CD4-positive, alpha-beta memory T cell (primary cell): ENCODE measurements at regions of chrX and their contacts with region 1.

Region 1: GRCh38 chrX:151082076-151082948 is 94.1 kb upstream of the GPR50 start:
- DNase-seq: peak; percentile 39 to 50 (median 46)
- H3K4me3 ChIP-seq: no peak overlapping the region
- H3K4me3 Mint-ChIP-seq: peak overlapping the region in 6 of 8 donors; percentile 13 to 52 (median 25)
- H3K27ac ChIP-seq: no peak overlapping the region
- H3K27ac Mint-ChIP-seq: no peak overlapping the region
- H3K4me1 ChIP-seq: no peaks in the 10 kb centered on the region
- H3K4me1 Mint-ChIP-seq: peaks cover 0 to 4% (median 0%) of the 10 kb centered on the region in 4 donors
- H3K27me3 ChIP-seq: no peaks in the 10 kb centered on the region
- H3K27me3 Mint-ChIP-seq: peaks cover 10 to 11% of the 10 kb centered on the region in 2 donors

Region 2: DNA sequence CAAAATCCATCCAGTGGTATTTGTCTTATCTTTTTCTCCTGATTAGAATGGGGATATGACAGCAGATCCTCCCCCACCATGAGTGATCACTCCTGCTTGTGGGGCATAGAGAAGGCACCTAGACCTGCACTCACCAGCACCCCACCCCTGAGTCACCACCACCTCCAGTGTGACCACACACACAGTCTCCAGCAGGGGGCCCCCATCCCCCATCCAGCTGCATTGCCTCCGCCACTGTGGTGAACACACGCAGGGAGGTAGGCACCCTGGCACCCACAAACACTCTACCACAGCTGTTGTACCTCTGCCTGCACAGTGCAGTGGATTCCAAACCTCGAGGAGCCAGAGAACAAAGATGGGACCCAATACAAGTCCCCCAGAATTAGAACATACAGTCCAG is 1210.4 kb before region 1 on chrX:
- CTCF ChIA-PET with region 1: no interaction called
- POLR2A ChIA-PET with region 1: no interaction called
- intact Hi-C with region 1: loop called (anchors 5 kb)
- DNase-seq: peak; percentile 29 to 66 (median 58)
- H3K4me3 ChIP-seq: no peak overlapping the region
- H3K4me3 Mint-ChIP-seq: peak overlapping the region in 1 of 8 donors; percentile 1
- H3K27ac ChIP-seq: no peak overlapping the region
- H3K27ac Mint-ChIP-seq: no peak overlapping the region
- H3K4me1 ChIP-seq: no peaks in the 10 kb centered on the region
- H3K4me1 Mint-ChIP-seq: peaks cover 0 to 6% (median 1%) of the 10 kb centered on the region in 4 donors
- H3K27me3 ChIP-seq: no peaks in the 10 kb centered on the region
- H3K27me3 Mint-ChIP-seq: peaks cover 4 to 6% of the 10 kb centered on the region in 2 donors

Region 3: DNA sequence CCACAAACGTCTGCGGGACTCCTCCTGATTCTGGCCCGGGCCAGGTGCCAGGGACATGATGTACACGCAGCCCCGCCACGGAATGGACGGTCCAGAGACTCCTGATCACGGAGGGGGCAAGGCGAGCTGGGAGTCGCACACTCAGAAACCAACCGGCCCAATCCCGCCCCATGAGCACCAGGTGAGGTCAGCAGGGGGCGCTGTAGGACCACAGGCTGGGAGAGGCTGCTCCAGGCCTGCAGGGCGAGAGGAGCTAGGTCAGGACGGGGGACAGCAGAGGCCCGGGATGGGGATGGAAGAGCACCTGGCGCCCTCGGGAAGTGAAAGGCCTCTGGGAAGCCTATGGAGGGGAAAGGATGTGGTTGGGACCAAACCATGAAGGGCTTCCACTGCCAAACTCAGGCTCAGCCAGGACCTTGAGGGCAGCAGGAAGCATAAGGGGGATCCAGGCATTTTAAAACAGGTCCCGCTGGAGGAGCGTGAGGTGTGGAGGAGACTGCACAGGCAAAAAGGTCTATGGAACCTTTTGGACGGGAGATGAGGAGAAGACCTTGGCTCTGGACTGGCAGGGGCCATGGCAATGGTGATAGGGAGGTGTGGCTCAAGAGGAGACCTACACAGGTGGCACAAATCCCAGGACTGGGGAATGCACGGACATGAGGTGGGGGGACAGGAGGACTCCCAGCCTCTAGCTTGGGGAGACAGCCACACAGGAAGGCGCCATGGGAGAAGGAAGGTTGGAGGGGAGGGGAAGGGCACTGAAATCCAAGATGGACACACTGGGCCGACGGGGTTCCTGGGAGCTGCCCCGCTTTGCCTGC is 310.0 kb before region 1 on chrX:
- CTCF ChIA-PET with region 1: interaction called, 133 read pairs
- POLR2A ChIA-PET with region 1: no interaction called
- intact Hi-C with region 1: loop called (anchors 1 kb)
- DNase-seq: peak; percentile 53 to 61 (median 59)
- H3K4me3 ChIP-seq: no peak overlapping the region
- H3K4me3 Mint-ChIP-seq: no peak overlapping the region
- H3K27ac ChIP-seq: no peak overlapping the region
- H3K27ac Mint-ChIP-seq: no peak overlapping the region
- H3K4me1 ChIP-seq: no peaks in the 10 kb centered on the region
- H3K4me1 Mint-ChIP-seq: peaks cover 0 to 2% (median under 1%) of the 10 kb centered on the region in 4 donors
- H3K27me3 ChIP-seq: no peaks in the 10 kb centered on the region
- H3K27me3 Mint-ChIP-seq: no peaks in the 10 kb centered on the region

Region 4: GRCh38 chrX:150982788-150983520 is 99.4 kb before region 1 on chrX and contains the start of gene HMGB3:
- CTCF ChIA-PET with region 1: no interaction called
- POLR2A ChIA-PET with region 1: no interaction called
- intact Hi-C with region 1: loop called (anchors 5 kb)
- DNase-seq: peak; percentile 66 to 88 (median 73)
- H3K4me3 ChIP-seq: peak within 1 kb of the TSS in 1 of 2 donors; percentile 50
- H3K4me3 Mint-ChIP-seq: peak within 1 kb of the TSS; percentile 72 to 84 (median 76)
- H3K27ac ChIP-seq: no peak within 1 kb of the TSS
- H3K27ac Mint-ChIP-seq: peak within 1 kb of the TSS in 2 of 7 donors; percentile 39 to 63
- H3K4me1 ChIP-seq: peaks cover 8% of the 10 kb centered on the region
- H3K4me1 Mint-ChIP-seq: peaks cover 0 to 12% (median 2%) of the 10 kb centered on the region in 4 donors
- H3K27me3 ChIP-seq: no peaks in the 10 kb centered on the region
- H3K27me3 Mint-ChIP-seq: no peaks in the 10 kb centered on the region
- total RNA-seq, gene HMGB3: 1.7 to 1.9 TPM

Region 5: DNA sequence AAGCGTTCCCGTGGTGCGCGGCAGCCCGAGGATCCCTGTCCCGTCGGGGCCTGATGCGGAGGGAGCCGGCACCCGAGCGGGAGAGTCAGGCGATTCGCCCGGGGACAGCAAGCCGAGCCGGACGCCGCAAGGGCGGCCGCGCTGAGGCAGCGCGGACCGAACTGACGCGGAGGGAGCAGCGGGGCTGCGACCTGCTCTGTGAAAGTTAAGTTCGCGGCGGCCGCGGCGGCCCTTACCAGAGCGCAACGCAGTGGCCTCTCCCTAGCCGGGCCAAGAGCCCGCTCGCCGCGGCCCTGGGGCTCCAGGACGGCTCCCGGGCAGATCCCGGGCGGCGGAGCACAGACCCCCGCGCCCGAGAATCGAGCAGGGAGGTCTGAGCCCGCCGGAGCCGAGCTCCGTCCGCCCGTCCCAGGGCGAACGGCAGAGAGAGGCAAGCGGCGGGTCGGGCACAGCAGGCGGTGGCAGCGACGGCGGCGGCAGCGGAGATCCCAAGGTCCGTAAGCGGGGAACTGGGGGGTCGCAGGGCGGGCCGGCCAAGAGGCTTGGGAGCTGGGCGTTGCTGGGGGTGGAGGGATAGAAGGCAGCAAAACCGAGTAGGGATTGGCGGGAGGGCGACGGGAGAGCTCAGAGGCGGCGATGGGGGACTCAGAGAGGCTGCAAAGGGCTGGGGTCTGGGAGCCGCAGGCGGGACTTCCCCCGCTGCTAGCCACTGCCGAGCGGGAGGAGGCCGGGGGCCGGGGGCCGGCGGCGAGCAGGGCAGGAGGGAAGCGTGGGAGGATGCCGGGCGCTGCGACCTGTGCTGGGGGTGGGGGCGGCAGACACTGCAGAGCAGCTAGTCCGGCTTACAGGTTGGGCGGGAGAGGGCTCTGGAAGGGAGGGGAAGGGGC is 95.1 kb after region 1 on chrX:
- CTCF ChIA-PET with region 1: no interaction called
- POLR2A ChIA-PET with region 1: no interaction called
- intact Hi-C with region 1: no loop called
- DNase-seq: no peak
- H3K4me3 ChIP-seq: no peak overlapping the region
- H3K4me3 Mint-ChIP-seq: peak overlapping the region in 1 of 8 donors; percentile 41
- H3K27ac ChIP-seq: no peak overlapping the region
- H3K27ac Mint-ChIP-seq: no peak overlapping the region
- H3K4me1 ChIP-seq: no peaks in the 10 kb centered on the region
- H3K4me1 Mint-ChIP-seq: peaks cover 3 to 12% (median 8%) of the 10 kb centered on the region in 4 donors
- H3K27me3 ChIP-seq: no peaks in the 10 kb centered on the region
- H3K27me3 Mint-ChIP-seq: peaks cover 29% of the 10 kb centered on the region in 2 donors